PC-9 (cell line): ENCODE measurements at regions of chr15 and their contacts with region 1.

Region 1: GRCh38 chr15:55514414-55514850 is 6.4 kb upstream of the DNAAF4 start:
- DNase-seq: peak; percentile 72 to 82
- H3K4me3 ChIP-seq: peak overlapping the region; percentile 57; the same call in 1 of the 2 replicates
- H3K27ac ChIP-seq: peak overlapping the region; percentile 81
- H3K4me1 ChIP-seq: peaks cover 27% of the 10 kb centered on the region
- H3K27me3 ChIP-seq: no peaks in the 10 kb centered on the region
- CTCF ChIP-seq: no peak

Region 2: DNA sequence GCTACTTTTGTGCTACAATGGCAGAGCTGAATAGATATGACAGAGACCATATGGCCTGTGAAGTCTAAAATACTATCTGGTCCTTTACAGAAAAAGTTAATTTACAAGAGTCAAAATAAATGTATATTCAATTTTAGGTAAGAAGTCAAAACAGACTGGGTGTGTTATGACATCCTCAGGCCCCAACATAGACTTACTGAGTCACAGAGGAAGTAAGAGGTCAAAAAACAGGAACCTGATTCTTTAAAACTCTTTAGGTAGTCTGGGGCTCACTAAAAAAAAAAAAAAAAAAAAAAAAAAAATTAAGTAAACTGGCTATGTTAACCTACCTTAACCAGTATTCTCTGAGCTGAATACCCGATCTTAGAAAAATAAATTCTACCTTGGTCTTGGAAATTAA is 19.5 kb before region 1 on chr15:
- CTCF ChIA-PET with region 1: interaction called, 8 read pairs
- POLR2A ChIA-PET with region 1: no interaction called
- intact Hi-C with region 1: loop called (anchors 1 kb)
- DNase-seq: no peak
- H3K4me3 ChIP-seq: no peak overlapping the region
- H3K27ac ChIP-seq: no peak overlapping the region
- H3K4me1 ChIP-seq: no peaks in the 10 kb centered on the region
- H3K27me3 ChIP-seq: no peaks in the 10 kb centered on the region
- CTCF ChIP-seq: no peak

Region 3: DNA sequence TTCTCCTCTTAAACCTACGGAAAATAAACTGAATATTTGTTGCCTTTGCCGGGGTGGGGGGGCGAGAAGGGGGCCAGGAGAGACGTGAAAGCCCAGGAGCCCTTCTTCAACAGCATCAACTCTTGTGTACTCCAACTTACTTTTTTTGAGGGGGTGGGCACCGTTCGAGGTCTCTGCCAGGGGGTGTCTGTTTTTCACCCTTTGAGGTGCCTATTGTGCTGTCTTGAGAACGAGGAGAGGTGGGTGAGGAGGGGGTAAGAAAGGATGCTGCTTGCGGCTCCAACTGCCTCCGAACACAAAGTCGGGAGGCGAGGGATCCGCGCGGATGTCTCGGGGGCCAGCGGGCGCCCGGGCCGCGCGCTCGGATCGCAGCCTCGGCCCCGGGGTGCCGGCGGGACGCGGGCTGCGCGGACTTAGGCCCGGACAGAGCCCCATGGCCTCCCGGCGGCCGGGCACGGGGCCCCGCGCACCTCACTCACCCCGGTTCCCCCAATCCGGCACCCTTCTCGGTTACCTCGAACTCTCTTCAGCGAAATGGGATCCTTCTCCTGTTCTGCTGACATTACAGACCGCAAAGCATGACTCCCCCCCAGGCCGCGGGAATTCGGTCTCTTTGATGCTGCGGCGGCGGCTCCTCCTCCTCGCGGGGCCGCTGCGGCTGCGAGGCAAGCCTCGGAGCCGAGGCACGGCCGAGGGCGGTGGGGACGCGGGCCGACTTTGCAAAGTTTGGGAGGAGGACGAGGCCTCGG is 73.1 kb after region 1 on chr15:
- CTCF ChIA-PET with region 1: no interaction called
- POLR2A ChIA-PET with region 1: no interaction called
- intact Hi-C with region 1: loop called (anchors 2 kb)
- DNase-seq: peak in 1 of 2 experiments; percentile 30
- H3K4me3 ChIP-seq: peak overlapping the region; percentile 73
- H3K27ac ChIP-seq: no peak overlapping the region
- H3K4me1 ChIP-seq: peaks cover 8% of the 10 kb centered on the region
- H3K27me3 ChIP-seq: no peaks in the 10 kb centered on the region
- CTCF ChIP-seq: no peak

Region 4: GRCh38 chr15:55627730-55628368 is 113.4 kb after region 1 on chr15:
- CTCF ChIA-PET with region 1: interaction called, 12 read pairs
- POLR2A ChIA-PET with region 1: no interaction called
- intact Hi-C with region 1: loop called (anchors 5 kb)
- DNase-seq: peak; percentile 77 to 94
- H3K4me3 ChIP-seq: peak overlapping the region; percentile 41; the same call in 1 of the 2 replicates
- H3K27ac ChIP-seq: peak overlapping the region; percentile 86
- H3K4me1 ChIP-seq: peaks cover 14% of the 10 kb centered on the region
- H3K27me3 ChIP-seq: no peaks in the 10 kb centered on the region
- CTCF ChIP-seq: no peak

Region 5: GRCh38 chr15:55637086-55637485 is 122.7 kb after region 1 on chr15:
- CTCF ChIA-PET with region 1: no interaction called
- POLR2A ChIA-PET with region 1: no interaction called
- intact Hi-C with region 1: loop called (anchors 1 kb)
- DNase-seq: no peak
- H3K4me3 ChIP-seq: no peak overlapping the region
- H3K27ac ChIP-seq: no peak overlapping the region
- H3K4me1 ChIP-seq: no peaks in the 10 kb centered on the region
- H3K27me3 ChIP-seq: no peaks in the 10 kb centered on the region
- CTCF ChIP-seq: no peak